ENCODE measurements at regions of chr12 and their contacts with region 1.

Region 1: DNA sequence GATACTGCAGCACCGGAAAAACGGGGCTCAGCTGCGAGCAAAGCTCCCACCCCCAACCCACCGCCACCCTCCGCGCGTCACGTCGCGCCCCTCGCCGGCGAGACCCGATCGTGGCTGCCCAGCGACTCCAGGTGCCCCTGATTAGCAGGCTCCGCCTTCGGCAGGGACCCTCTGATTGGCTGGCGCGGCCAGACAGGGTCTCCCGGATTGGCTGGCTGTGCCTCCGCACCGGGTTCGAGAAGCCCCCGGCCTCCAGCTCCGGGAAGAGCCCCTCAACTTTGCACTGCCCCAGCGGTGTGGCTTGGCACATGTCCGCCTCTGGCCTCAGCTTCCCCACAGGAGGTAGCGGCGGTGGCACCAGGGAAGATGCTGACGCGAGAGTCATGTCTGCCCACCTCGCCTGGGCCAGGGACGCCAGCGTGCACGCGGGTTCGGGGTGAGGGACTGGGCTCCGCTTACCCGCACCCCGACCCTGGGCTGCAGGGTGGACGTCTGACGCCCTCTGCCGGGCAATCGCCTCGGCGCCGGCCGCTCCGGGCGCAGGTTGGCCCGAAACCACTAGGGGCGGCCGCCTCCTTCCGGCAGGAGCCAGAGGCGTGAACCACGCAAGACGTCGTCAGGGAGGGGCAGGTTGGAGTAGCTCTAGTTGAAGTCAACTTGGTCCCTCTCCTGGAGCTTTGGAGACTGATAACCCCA is 498 bp upstream of the RHOF start:
- DNase-seq: peak; percentile 95
- H3K4me3 Mint-ChIP-seq: peak overlapping the region; percentile 96
- H3K27ac Mint-ChIP-seq: peak overlapping the region; percentile 91
- H3K4me1 Mint-ChIP-seq: peaks cover 61% of the 10 kb centered on the region
- H3K27me3 Mint-ChIP-seq: no peaks in the 10 kb centered on the region

Region 2: GRCh38 chr12:121536899-121537813 is 256.8 kb before region 1 on chr12:
- intact Hi-C with region 1: loop called (anchors 5 kb)
- DNase-seq: peak; percentile 41
- H3K4me3 Mint-ChIP-seq: peak overlapping the region; percentile 76
- H3K27ac Mint-ChIP-seq: peak overlapping the region; percentile 12
- H3K4me1 Mint-ChIP-seq: peaks cover 34% of the 10 kb centered on the region
- H3K27me3 Mint-ChIP-seq: peaks cover 4% of the 10 kb centered on the region

Region 3: DNA sequence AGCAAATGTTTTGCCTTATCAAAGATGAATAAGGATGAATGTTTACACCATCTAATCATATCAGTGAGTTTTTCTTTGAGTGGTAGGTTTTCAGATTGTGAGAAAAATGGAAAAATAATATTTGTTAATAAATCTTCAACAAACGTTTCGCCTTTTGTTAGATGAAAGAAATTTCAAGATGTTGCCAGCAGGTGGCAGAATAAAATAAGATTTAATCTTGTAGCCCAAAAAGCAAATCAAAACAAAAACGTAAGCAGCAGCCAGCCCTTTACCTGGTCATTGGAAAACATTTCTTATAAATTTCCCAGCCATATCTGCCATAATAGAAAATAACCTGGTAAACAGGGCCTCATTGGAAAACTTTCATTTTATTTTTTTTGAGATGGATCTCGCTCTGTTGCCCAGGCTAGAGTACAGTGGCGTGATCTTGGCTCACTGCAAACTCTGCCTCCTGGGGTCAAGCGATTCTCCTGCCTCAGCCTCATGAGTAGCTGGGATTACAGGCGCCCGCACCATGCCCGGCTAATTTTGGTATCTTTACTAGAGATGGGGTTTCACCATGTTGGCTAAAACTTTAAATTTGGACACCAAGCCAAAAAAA is 96.8 kb before region 1 on chr12:
- intact Hi-C with region 1: loop called (anchors 1 kb)
- DNase-seq: peak; percentile 24
- H3K4me3 Mint-ChIP-seq: no peak overlapping the region
- H3K27ac Mint-ChIP-seq: no peak overlapping the region
- H3K4me1 Mint-ChIP-seq: no peaks in the 10 kb centered on the region
- H3K27me3 Mint-ChIP-seq: peaks cover 10% of the 10 kb centered on the region

Region 4: GRCh38 chr12:121781998-121782979 is 11.7 kb before region 1 on chr12:
- intact Hi-C with region 1: loop called (anchors 1 kb)
- DNase-seq: peak; percentile 42
- H3K4me3 Mint-ChIP-seq: peak overlapping the region; percentile 59
- H3K27ac Mint-ChIP-seq: peak overlapping the region; percentile 92
- H3K4me1 Mint-ChIP-seq: peaks cover 49% of the 10 kb centered on the region
- H3K27me3 Mint-ChIP-seq: no peaks in the 10 kb centered on the region

Region 5: GRCh38 chr12:121888478-121889266 is 94.7 kb after region 1 on chr12 and contains the start of gene PSMD9:
- intact Hi-C with region 1: loop called (anchors 1 kb)
- DNase-seq: peak; percentile 98
- H3K4me3 Mint-ChIP-seq: peak within 1 kb of the TSS; percentile 99
- H3K27ac Mint-ChIP-seq: peak within 1 kb of the TSS; percentile 99
- H3K4me1 Mint-ChIP-seq: peaks cover 35% of the 10 kb centered on the region
- H3K27me3 Mint-ChIP-seq: peaks cover 2% of the 10 kb centered on the region
- total RNA-seq, gene PSMD9: 63.9 and 67.5 TPM in 2 replicates

Measured in activated T-helper 1 cell treated with anti-CD3 and anti-CD28 coated beads, Interleukin-12 subunit alpha, Interleukin-12 subunit beta, Interleukin-2, Interleukin-4 antibody, amounts not matched to agents 30 ng/mL and 10 ng/mL and 1 ng/mL, durations not matched to agents 14 hours and 24 hours and 36 hours (primary cell).